ENCODE measurements at regions of chr9 and their contacts with region 1.

Region 1: DNA sequence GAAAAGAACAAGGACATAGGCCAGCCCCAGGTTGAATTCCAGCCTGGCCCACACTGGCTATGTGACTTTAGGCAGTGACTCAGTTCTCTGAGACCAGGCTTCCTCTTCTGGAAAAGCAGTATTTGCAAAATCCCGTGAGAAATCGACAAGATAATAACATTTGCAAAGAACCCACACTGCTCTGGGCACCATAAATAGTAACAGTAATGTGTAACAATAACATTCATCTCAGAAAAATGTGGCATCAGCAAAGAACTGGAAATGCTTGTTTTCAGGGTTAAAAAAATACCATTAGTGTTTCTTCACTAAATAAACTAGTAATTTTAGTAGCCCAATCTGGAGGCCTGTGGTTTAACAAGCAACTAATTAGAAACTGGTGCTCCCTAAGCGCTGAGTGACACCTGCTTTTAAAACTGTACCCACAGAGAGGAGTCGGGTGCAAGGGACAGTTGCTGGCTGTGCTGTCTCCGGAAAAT is 148.4 kb downstream of the TTLL11 start:
- DNase-seq: peak; percentile 81
- H3K4me3 ChIP-seq: peak overlapping the region; percentile 48
- H3K27ac ChIP-seq: peak overlapping the region; percentile 99
- H3K4me1 ChIP-seq: peaks cover 98% of the 10 kb centered on the region
- CTCF ChIP-seq: no peak

Region 2: DNA sequence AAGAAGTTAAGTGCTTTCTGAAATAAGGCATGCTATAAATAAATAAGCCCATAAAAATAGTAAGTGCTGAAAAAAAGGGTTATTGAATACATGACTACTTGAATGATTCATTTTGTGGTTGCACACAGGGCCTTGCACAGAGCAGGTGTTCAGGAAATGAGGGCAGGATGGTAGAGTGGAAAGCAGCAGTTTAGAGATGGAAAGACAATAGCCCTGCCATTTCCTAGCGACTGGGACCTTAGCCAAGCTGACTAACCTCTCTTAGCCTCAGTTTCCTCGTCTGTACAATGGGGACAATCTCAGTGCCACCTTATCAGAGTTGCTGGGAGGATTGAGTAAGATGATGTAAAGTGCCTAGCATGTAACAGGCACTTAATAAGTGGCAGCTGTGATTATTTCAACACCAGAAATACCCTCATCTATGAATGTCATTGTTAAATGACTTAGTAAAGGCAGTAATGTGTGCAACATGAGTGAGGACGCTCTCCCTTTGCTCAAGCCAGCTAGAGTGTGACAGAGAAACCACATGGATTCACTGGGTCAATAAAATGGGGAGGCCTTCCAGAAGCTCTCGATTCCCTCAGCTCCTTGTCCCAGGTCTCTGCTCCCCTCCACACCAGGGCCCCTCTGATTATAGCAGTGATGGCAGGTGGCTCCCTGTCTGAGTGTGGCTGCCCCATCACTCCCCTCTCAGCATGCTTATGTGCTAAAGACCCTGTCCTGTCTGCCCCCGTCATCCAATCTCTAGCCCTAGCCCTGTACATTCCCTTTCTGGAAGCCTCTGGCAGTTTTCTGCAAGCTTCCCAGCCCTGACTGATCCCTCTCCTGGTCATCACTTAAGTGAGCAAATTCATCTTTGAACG is 1051.8 kb before region 1 on chr9:
- CTCF ChIA-PET with region 1: no interaction called
- POLR2A ChIA-PET with region 1: interaction called, 10 read pairs
- intact Hi-C with region 1: no loop called
- DNase-seq: peak; percentile 97
- H3K4me3 ChIP-seq: peak overlapping the region; percentile 7
- H3K27ac ChIP-seq: peak overlapping the region; percentile 98
- H3K4me1 ChIP-seq: peaks cover 95% of the 10 kb centered on the region
- CTCF ChIP-seq: no peak

Region 3: GRCh38 chr9:121707477-121708424 is 237.0 kb before region 1 on chr9:
- CTCF ChIA-PET with region 1: no interaction called
- POLR2A ChIA-PET with region 1: no interaction called
- intact Hi-C with region 1: loop called (anchors 1 kb)
- DNase-seq: peak; percentile 90
- H3K4me3 ChIP-seq: peak overlapping the region; percentile 21
- H3K27ac ChIP-seq: peak overlapping the region; percentile 80
- H3K4me1 ChIP-seq: peaks cover 63% of the 10 kb centered on the region
- CTCF ChIP-seq: no peak

Region 4: GRCh38 chr9:121798941-121799340 is 145.8 kb before region 1 on chr9:
- CTCF ChIA-PET with region 1: no interaction called
- POLR2A ChIA-PET with region 1: no interaction called
- intact Hi-C with region 1: no loop called
- DNase-seq: no peak
- H3K4me3 ChIP-seq: no peak overlapping the region
- H3K27ac ChIP-seq: no peak overlapping the region
- H3K4me1 ChIP-seq: no peaks in the 10 kb centered on the region
- CTCF ChIP-seq: no peak

Region 5: GRCh38 chr9:121972501-121972981 is 27.8 kb after region 1 on chr9:
- CTCF ChIA-PET with region 1: interaction called, 3 read pairs
- POLR2A ChIA-PET with region 1: interaction called, 29 read pairs
- intact Hi-C with region 1: loop called (anchors 1 kb)
- DNase-seq: peak; percentile 95
- H3K4me3 ChIP-seq: peak overlapping the region; percentile 61
- H3K27ac ChIP-seq: peak overlapping the region; percentile 96
- H3K4me1 ChIP-seq: peaks cover 72% of the 10 kb centered on the region
- CTCF ChIP-seq: no peak

Region 6: GRCh38 chr9:121992571-121993212 is 47.9 kb after region 1 on chr9:
- CTCF ChIA-PET with region 1: no interaction called
- POLR2A ChIA-PET with region 1: interaction called, 6 read pairs
- intact Hi-C with region 1: loop called (anchors 1 kb)
- DNase-seq: peak; percentile 95
- H3K4me3 ChIP-seq: peak overlapping the region; percentile 32
- H3K27ac ChIP-seq: peak overlapping the region; percentile 82
- H3K4me1 ChIP-seq: peaks cover 45% of the 10 kb centered on the region
- CTCF ChIP-seq: peak; percentile 99